Naive thymus-derived CD4-positive, alpha-beta T cell (primary cell): ENCODE measurements at regions of chr15 and their contacts with region 1.

Region 1: DNA sequence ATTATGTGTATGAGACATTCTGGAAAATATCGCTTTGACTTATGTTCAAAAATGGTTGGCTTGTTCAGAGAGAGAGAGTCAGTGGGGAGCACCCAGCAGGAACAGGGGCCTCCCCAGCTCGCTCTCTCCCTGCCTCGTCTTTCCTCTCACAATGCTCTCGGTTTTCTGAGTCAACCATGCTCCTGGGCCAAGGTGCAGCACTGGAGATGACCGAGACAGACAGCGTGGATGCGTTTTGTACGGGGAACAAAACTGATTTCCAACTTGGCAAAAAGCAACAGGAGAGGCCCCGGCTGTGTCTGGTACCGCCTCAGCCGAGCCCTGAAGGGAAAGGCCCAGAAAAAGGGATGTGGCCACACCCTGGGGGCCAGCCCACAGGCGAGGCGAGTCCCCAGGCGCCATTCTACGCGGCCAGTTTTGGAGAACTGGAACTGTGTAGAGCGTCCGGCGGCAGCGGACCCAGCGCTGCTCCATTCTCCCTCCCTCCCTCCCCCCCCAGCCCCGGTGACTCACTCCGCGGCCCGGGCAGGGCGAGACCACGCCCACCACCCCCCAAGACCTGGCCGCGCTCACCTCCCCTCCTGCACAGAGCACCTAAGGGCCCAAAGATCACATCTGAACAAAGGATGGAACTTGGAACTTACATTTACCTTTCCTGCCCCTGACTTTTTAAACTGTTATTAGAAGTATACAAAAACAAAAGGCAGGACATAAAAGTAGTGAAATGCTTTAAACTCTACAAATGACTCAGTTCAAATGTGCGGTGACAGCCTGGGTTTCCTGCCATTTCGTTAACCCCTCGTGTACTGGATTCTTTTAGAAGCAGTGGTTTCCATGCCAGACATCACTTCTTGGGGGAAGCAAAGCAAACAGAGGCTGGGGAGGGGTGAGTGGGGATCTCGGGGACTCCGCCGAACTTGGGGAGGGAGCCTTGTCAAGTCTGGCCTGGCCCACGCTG is 12.7 kb downstream of the ATP10A start:
- DNase-seq: peak; percentile 42 to 78 (median 73)
- ATAC-seq: peak; percentile 79
- H3K4me3 ChIP-seq: peak overlapping the region; percentile 65
- H3K4me3 Mint-ChIP-seq: peak overlapping the region; percentile 84 to 98 (median 94)
- H3K27ac ChIP-seq: peak overlapping the region; percentile 73
- H3K27ac Mint-ChIP-seq: peak overlapping the region; percentile 89 to 100 (median 98)
- H3K4me1 ChIP-seq: peaks cover 28 to 73% of the 10 kb centered on the region in 2 donors
- H3K4me1 Mint-ChIP-seq: peaks cover 64 to 100% (median 92%) of the 10 kb centered on the region in 7 donors
- H3K27me3 ChIP-seq: no peaks in the 10 kb centered on the region
- H3K27me3 Mint-ChIP-seq: no peaks in the 10 kb centered on the region

Region 2: GRCh38 chr15:25438601-25439368 is 411.6 kb before region 1 on chr15 and contains the start of gene UBE3A:
- CTCF ChIA-PET with region 1: no interaction called
- POLR2A ChIA-PET with region 1: no interaction called
- intact Hi-C with region 1: loop called (anchors 1 to 2 kb)
- DNase-seq: peak; percentile 76 to 94 (median 88)
- ATAC-seq: peak; percentile 96
- H3K4me3 ChIP-seq: peak within 1 kb of the TSS; percentile 80
- H3K4me3 Mint-ChIP-seq: peak within 1 kb of the TSS; percentile 88 to 96 (median 92)
- H3K27ac ChIP-seq: peak within 1 kb of the TSS; percentile 93
- H3K27ac Mint-ChIP-seq: peak within 1 kb of the TSS; percentile 79 to 97 (median 93)
- H3K4me1 ChIP-seq: peaks cover 23 to 28% of the 10 kb centered on the region in 2 donors
- H3K4me1 Mint-ChIP-seq: peaks cover 17 to 42% (median 36%) of the 10 kb centered on the region in 7 donors
- H3K27me3 ChIP-seq: no peaks in the 10 kb centered on the region
- H3K27me3 Mint-ChIP-seq: no peaks in the 10 kb centered on the region
- total RNA-seq, gene UBE3A: 87.0 to 143 (median 127) TPM

Region 3: GRCh38 chr15:25790000-25790660 is 60.3 kb before region 1 on chr15:
- CTCF ChIA-PET with region 1: no interaction called
- POLR2A ChIA-PET with region 1: interaction called, 4 read pairs
- intact Hi-C with region 1: loop called in 1 of 2 experiments (anchors 2 kb)
- DNase-seq: peak in 1 of 9 donors; percentile 66
- ATAC-seq: peak; percentile 25
- H3K4me3 ChIP-seq: no peak overlapping the region
- H3K4me3 Mint-ChIP-seq: no peak overlapping the region
- H3K27ac ChIP-seq: no peak overlapping the region
- H3K27ac Mint-ChIP-seq: peak overlapping the region in 7 of 9 donors; percentile 3 to 89 (median 48)
- H3K4me1 ChIP-seq: peaks cover 0 to 5% of the 10 kb centered on the region in 2 donors
- H3K4me1 Mint-ChIP-seq: peaks cover 56 to 82% (median 69%) of the 10 kb centered on the region in 7 donors
- H3K27me3 ChIP-seq: no peaks in the 10 kb centered on the region
- H3K27me3 Mint-ChIP-seq: no peaks in the 10 kb centered on the region

Region 4: DNA sequence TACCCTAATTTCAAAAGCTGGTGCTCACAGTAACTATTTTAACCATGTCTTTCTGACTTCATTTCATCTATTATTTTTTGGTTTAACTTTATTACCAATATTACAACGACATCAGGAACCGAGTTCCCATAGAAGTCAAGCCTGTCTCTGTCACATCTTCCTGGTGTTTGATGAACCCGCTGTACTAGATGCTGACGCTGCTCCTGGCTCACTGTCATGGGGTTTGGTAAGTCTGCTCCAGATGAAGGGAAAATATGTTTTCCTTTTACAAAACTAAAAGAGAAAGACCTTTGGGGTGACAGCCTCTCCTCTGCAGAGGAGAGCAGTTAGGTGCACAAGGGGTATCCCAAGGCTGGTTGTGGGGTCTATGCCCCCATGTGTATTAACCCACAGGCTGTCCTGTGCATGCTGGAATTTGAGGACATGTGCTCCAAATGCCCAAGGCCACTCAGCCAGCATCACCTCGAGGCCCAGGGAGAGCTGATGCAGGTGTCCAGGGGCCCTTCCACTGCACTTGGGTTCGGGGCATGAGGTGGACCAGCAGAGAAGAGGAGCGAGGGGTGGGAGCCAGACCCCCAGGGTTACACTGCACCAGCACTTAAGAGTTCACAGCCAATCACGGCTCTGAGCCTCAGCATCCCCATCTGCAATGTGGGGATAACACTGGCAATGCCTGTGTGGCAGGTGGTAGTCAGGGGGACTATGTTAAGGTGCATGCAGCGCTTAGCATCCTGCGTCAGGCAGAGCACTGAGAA is 49.5 kb before region 1 on chr15:
- CTCF ChIA-PET with region 1: no interaction called
- POLR2A ChIA-PET with region 1: no interaction called
- intact Hi-C with region 1: no loop called
- DNase-seq: no peak
- ATAC-seq: no peak
- H3K4me3 ChIP-seq: no peak overlapping the region
- H3K4me3 Mint-ChIP-seq: peak overlapping the region in 8 of 10 donors; percentile 72 to 89 (median 82)
- H3K27ac ChIP-seq: no peak overlapping the region
- H3K27ac Mint-ChIP-seq: peak overlapping the region in 7 of 9 donors; percentile 10 to 93 (median 71)
- H3K4me1 ChIP-seq: peaks cover 0 to 38% of the 10 kb centered on the region in 2 donors
- H3K4me1 Mint-ChIP-seq: peaks cover 42 to 82% (median 69%) of the 10 kb centered on the region in 7 donors
- H3K27me3 ChIP-seq: no peaks in the 10 kb centered on the region
- H3K27me3 Mint-ChIP-seq: no peaks in the 10 kb centered on the region

Region 5: GRCh38 chr15:25830844-25831451 is 19.5 kb before region 1 on chr15:
- CTCF ChIA-PET with region 1: interaction called, 7 read pairs
- POLR2A ChIA-PET with region 1: interaction called, 6 read pairs
- intact Hi-C with region 1: loop called in 1 of 2 experiments (anchors 1 kb)
- DNase-seq: no peak
- ATAC-seq: no peak
- H3K4me3 ChIP-seq: no peak overlapping the region
- H3K4me3 Mint-ChIP-seq: no peak overlapping the region
- H3K27ac ChIP-seq: no peak overlapping the region
- H3K27ac Mint-ChIP-seq: peak overlapping the region in 4 of 9 donors; percentile 38 to 67 (median 64)
- H3K4me1 ChIP-seq: peaks cover 0 to 8% of the 10 kb centered on the region in 2 donors
- H3K4me1 Mint-ChIP-seq: peaks cover 18 to 76% (median 61%) of the 10 kb centered on the region in 7 donors
- H3K27me3 ChIP-seq: no peaks in the 10 kb centered on the region
- H3K27me3 Mint-ChIP-seq: no peaks in the 10 kb centered on the region

Region 6: DNA sequence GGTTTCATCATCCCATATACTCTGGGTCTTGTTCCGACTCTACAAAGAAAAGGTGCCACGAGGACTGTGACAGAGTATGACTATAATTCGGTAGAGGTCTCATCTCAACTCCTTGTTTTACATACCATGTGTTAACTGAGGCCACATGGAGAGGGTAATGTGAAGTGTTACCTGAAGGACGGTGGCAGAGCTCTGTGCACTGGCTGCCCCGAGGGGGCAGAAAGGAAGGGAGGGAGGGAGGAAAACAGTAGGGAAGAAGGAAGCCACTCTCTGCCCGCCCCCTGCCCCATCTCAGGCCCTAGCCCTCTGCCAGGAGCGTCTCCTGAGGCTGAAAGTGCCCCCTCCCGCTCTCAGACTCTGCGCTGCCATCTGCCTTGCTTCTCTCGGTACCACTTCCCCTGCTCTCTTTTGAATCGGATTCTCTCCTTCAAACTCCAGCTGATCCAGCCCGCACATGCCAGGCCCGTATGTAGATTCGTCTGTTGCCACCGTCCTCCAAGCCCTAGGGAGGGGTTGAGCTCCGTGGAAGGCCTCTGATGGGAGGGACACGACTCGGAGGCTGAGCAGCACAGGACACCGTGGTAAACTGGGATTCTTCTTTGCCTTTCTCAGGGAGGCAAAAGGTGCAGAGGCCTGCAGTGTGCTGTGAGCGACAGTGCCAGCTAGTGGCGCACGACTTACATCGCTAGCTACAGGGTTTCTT is 83.2 kb after region 1 on chr15:
- CTCF ChIA-PET with region 1: no interaction called
- POLR2A ChIA-PET with region 1: interaction called, 5 read pairs
- intact Hi-C with region 1: loop called in 1 of 2 experiments (anchors 5 kb)
- DNase-seq: peak; percentile 36 to 77 (median 68)
- ATAC-seq: peak; percentile 97
- H3K4me3 ChIP-seq: peak overlapping the region; percentile 73
- H3K4me3 Mint-ChIP-seq: peak overlapping the region; percentile 78 to 98 (median 90)
- H3K27ac ChIP-seq: no peak overlapping the region
- H3K27ac Mint-ChIP-seq: peak overlapping the region in 7 of 9 donors; percentile 21 to 79 (median 51)
- H3K4me1 ChIP-seq: no peaks in the 10 kb centered on the region
- H3K4me1 Mint-ChIP-seq: peaks cover 0 to 10% (median 8%) of the 10 kb centered on the region in 7 donors
- H3K27me3 ChIP-seq: no peaks in the 10 kb centered on the region
- H3K27me3 Mint-ChIP-seq: peaks cover 0 to 11% (median 5%) of the 10 kb centered on the region in 5 donors